MCF 10A (cell line): ENCODE measurements at regions of chr5 and their contacts with region 1.

Region 1: DNA sequence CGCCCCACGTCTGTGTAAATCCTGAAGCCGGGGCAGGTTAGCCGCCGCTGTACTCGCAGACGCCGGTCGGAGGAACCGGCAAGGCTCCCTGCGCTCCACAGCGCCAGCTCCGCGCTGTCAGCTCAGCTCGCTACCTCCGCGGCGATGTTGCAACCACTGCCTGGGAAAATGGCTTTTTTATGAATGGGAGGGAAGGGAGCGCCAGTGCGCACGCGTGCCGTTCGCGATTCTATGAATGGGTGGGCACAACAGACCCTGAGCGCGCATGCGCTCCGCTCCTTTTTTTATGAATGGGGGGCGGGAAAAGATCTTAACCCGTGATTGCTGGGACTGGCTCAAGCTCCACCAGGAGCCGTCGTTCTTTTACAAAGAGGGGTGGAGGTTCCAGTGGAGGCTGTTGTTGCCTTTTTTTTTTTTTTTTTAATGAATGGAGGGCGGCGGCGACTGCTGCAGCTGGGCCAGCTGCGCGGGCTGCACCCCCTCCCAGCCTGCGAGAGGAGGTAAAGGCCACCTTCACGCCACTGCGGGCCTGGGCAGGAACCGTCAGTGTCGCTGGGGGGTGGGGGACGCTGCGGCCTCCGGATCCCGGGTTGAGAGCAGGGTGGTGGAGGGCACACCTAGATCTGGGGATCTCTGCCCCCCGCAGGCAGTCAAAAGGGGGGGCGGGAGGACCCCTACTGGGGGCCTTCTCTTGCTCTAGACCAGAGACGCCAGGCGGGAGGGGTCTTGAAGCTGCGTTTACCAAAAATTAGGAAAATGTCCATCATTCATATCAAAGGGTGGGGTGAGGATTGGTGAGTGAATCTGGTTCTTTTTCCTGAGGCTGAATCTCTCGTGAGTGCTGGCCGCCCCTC is at the start of gene SPRY4:
- DNase-seq: peak; percentile 100
- H3K4me3 Mint-ChIP-seq: peak within 1 kb of the TSS; percentile 76
- H3K27ac Mint-ChIP-seq: peak within 1 kb of the TSS; percentile 77
- H3K4me1 Mint-ChIP-seq: peaks cover 55% of the 10 kb centered on the region
- H3K27me3 Mint-ChIP-seq: no peaks in the 10 kb centered on the region
- CTCF ChIP-seq: peak; percentile 6
- total RNA-seq, gene SPRY4: 34.5 and 41.9 TPM in 2 replicates

Region 2: DNA sequence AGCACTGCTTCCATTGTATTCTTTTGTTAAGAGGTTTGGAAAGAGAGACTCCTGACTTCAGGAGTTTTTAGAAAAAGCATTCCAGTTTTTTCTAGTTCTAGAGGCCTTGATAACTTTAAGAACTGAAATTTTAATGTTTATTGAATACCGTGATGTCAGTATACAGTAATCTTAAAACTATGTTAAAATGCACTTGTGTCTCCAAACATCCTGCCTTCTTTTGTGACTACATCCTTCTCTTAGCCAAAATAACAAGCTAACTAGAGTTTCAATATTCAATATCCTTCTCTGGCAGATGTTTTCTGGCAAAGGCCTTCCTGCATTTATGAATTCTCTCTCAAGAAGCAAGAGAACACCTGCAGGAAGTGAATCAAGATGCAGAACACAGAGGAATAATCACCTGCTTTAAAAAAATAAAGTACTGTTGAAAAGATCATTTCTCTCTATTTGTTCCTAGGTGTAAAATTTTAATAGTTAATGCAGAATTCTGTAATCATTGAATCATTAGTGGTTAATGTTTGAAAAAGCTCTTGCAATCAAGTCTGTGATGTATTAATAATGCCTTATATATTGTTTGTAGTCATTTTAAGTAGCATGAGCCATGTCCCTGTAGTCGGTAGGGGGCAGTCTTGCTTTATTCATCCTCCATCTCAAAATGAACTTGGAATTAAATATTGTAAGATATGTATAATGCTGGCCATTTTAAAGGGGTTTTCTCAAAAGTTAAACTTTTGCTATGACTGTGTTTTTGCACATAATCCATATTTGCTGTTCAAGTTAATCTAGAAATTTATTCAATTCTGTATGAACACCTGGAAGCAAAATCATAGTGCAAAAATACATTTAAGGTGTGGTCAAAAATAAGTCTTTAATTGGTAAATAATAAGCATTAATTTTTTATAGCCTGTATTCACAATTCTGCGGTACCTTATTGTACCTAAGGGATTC is 173.4 kb before region 1 on chr5:
- CTCF ChIA-PET with region 1: interaction called, 4 read pairs
- POLR2A ChIA-PET with region 1: interaction called, 5 read pairs
- intact Hi-C with region 1: loop called (anchors 1 kb)
- DNase-seq: peak; percentile 85
- H3K4me3 Mint-ChIP-seq: no peak overlapping the region
- H3K27ac Mint-ChIP-seq: no peak overlapping the region
- H3K4me1 Mint-ChIP-seq: no peaks in the 10 kb centered on the region
- H3K27me3 Mint-ChIP-seq: no peaks in the 10 kb centered on the region
- CTCF ChIP-seq: peak; percentile 89

Region 3: DNA sequence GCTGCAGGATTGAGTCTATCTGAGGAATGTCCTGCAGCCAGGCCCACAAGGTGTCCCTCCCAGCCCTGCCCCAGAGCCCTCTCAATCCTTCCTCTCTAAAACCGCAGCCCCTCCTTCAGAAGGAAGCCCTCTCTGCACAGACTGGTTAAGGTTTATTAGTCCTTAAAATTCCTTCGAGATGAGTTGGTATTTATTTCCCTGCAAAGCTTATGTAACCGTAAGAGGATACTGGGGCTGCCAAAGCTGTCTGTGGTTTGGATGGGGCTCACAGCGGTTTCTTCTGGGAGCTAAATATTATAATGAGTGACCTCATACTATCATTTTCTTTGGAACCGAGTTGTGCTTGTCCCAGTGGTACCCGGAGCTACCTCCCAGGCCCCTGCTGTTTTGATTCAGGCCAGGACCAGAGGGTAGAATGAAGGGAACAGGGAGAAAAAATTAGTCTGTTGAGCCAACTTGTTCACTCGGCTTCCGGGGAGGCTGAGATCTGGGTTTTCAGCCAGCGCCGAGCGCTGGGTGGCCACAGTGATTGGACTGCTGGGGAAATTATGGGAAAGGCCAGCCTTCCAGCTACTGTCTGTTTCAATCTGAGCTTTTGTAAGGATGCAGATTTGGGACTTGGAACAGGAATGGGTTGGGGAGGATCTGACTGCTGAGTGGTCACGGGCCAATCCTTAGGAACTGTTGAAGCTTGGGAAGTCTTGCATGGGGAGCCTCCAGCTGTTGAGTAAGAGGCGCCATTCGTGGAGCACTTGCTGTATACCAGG is 109.0 kb before region 1 on chr5:
- CTCF ChIA-PET with region 1: no interaction called
- POLR2A ChIA-PET with region 1: interaction called, 5 read pairs
- intact Hi-C with region 1: loop called (anchors 5 kb)
- DNase-seq: peak; percentile 99
- H3K4me3 Mint-ChIP-seq: peak overlapping the region; percentile 72
- H3K27ac Mint-ChIP-seq: peak overlapping the region; percentile 35
- H3K4me1 Mint-ChIP-seq: peaks cover 12% of the 10 kb centered on the region
- H3K27me3 Mint-ChIP-seq: peaks cover 2% of the 10 kb centered on the region
- CTCF ChIP-seq: no peak

Region 4: GRCh38 chr5:142343531-142343930 is 18.4 kb after region 1 on chr5:
- CTCF ChIA-PET with region 1: interaction called, 3 read pairs
- POLR2A ChIA-PET with region 1: interaction called, 10 read pairs
- intact Hi-C with region 1: no loop called
- DNase-seq: no peak
- H3K4me3 Mint-ChIP-seq: no peak overlapping the region
- H3K27ac Mint-ChIP-seq: no peak overlapping the region
- H3K4me1 Mint-ChIP-seq: peaks cover 17% of the 10 kb centered on the region
- H3K27me3 Mint-ChIP-seq: no peaks in the 10 kb centered on the region
- CTCF ChIP-seq: no peak

Region 5: DNA sequence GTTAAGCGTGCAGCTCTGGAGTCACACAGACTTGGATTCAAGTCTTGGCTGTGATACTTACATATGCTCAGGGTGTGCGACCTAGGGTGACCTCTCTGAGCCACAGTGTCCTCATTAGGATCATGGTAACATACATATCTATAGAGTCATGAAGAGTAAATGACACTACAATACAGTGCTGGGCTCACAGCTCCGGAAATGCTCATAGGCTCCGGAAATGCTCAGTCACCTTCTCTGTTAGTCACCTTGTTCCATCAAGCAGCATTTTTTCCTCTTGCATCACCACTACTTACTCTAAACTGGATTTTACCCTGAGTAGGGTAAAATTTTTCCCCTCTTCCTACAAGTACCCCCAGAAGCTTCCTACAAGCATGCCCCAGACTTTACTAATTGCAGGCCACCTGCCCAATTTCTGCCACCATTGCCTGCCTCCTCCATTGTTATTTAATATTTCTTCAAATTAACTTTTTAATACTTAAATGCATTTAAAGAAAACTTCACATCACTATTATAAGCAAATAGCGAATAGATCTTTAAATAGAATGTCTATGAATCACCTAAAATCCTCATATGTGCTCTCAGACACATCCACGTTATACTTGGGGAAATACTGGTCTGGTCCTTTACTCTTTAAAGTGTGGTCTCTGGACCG is 147.3 kb after region 1 on chr5:
- CTCF ChIA-PET with region 1: interaction called, 5 read pairs
- POLR2A ChIA-PET with region 1: interaction called, 3 read pairs
- intact Hi-C with region 1: loop called (anchors 2 kb)
- DNase-seq: peak; percentile 91
- H3K4me3 Mint-ChIP-seq: no peak overlapping the region
- H3K27ac Mint-ChIP-seq: peak overlapping the region; percentile 84
- H3K4me1 Mint-ChIP-seq: peaks cover 30% of the 10 kb centered on the region
- H3K27me3 Mint-ChIP-seq: no peaks in the 10 kb centered on the region
- CTCF ChIP-seq: no peak